ENCODE measurements at regions of chr1 and their contacts with region 1.

Region 1: DNA sequence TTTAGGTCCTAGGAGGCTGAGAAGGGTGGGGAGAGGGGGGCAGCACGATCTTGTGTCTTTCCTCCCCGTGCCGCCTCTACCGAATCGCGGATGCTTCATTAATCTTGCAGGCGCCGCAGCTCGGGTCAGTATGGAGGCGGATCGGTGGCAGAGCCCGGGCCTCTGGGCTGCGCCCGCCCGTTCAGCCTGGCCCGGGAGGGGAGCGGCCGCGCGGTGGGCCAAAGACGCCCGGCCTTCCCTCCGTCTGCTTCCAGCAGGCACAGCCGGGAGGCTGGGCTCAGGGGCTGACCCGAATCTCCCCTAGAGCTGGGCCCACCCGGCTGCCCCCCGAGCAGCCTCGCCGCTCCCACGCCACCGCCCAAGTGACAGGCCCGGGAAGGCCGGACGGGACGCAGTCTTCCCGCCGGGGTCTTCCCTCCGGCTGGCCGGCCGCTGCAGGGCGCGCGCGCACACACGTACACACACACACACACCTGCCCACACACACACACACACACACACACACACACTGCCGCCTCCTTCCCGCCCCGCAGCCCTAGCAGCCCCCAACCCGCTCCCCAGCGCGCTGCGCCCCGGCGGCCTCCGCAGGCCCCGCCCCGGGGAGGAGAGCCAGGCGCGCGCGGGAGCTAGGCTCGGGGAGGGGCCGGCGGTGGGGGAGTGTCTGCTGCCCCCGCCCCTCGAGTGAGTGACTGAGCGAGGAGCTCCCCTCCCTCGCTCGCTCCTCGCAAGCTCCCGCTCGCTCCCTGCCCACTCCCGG is at the start of gene C1orf21:
- DNase-seq: peak; percentile 89
- H3K4me3 ChIP-seq: peak within 1 kb of the TSS; percentile 66 to 87 (median 78)
- H3K27ac ChIP-seq: peak within 1 kb of the TSS; percentile 85
- H3K4me1 ChIP-seq: peaks cover 35% of the 10 kb centered on the region
- H3K27me3 ChIP-seq: no peaks in the 10 kb centered on the region
- CTCF ChIP-seq: no peak
- total RNA-seq, gene C1orf21: 34.8 to 37.2 TPM

Region 2: DNA sequence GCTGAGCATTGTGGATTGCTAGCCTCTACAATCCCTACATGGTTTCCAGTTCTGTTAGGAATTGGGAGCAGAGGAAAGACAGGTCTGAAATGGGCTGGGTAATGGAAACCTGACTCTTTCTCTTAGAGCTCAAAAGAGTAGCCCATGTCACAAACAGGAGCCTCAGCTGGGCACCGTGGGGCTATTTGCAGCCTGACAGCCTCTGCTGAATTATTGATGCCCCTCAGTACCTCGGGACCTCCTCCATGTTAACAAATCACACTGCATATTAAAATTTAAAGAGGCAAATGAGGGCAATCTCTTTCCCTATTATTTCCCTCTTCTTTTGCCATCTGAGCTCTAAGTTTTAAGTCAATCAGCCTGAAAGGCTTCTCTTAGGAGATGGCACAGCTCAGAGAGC is 177.9 kb before region 1 on chr1:
- CTCF ChIA-PET with region 1: no interaction called
- dilution Hi-C with region 1: no loop called
- in situ Hi-C with region 1: no loop called
- intact Hi-C with region 1: no loop called
- DNase-seq: no peak
- H3K4me3 ChIP-seq: no peak overlapping the region
- H3K27ac ChIP-seq: no peak overlapping the region
- H3K4me1 ChIP-seq: peaks cover 5% of the 10 kb centered on the region
- H3K27me3 ChIP-seq: no peaks in the 10 kb centered on the region
- CTCF ChIP-seq: no peak

Region 3: DNA sequence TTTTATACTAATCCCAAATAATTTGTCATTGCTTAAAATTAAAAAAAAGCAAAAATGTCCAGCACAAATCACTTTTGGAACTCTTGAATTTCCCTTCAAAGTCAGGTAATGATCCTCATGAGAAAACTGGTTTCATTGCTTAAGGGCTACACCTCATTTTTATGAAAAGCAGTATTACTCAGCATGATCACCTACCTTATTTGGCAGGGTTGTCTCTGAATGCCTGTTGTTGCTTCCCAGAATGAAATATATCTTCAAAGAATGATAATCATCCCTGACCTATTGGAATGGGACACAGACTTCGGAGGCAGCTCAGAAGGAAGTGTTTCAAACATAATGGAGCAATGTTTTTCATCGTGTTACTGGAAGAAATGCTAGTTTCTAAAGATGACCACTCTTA is 30.0 kb after region 1 on chr1:
- CTCF ChIA-PET with region 1: no interaction called
- dilution Hi-C with region 1: no loop called
- in situ Hi-C with region 1: no loop called
- intact Hi-C with region 1: loop called (anchors 1 kb)
- DNase-seq: peak; percentile 88
- H3K4me3 ChIP-seq: peak overlapping the region in 1 of 3 experiments; percentile 5
- H3K27ac ChIP-seq: peak overlapping the region; percentile 87
- H3K4me1 ChIP-seq: peaks cover 53% of the 10 kb centered on the region
- H3K27me3 ChIP-seq: no peaks in the 10 kb centered on the region
- CTCF ChIP-seq: no peak

Region 4: GRCh38 chr1:184465489-184466146 is 79.1 kb after region 1 on chr1:
- CTCF ChIA-PET with region 1: no interaction called
- dilution Hi-C with region 1: no loop called
- in situ Hi-C with region 1: no loop called
- intact Hi-C with region 1: loop called (anchors 5 kb)
- DNase-seq: no peak
- H3K4me3 ChIP-seq: no peak overlapping the region
- H3K27ac ChIP-seq: no peak overlapping the region
- H3K4me1 ChIP-seq: peaks cover 6% of the 10 kb centered on the region
- H3K27me3 ChIP-seq: no peaks in the 10 kb centered on the region
- CTCF ChIP-seq: no peak

Region 5: GRCh38 chr1:184514447-184514846 is 128.0 kb after region 1 on chr1:
- CTCF ChIA-PET with region 1: no interaction called
- dilution Hi-C with region 1: no loop called
- in situ Hi-C with region 1: no loop called
- intact Hi-C with region 1: no loop called
- DNase-seq: no peak
- H3K4me3 ChIP-seq: no peak overlapping the region
- H3K27ac ChIP-seq: no peak overlapping the region
- H3K4me1 ChIP-seq: peaks cover 12% of the 10 kb centered on the region
- H3K27me3 ChIP-seq: no peaks in the 10 kb centered on the region
- CTCF ChIP-seq: no peak

Region 6: DNA sequence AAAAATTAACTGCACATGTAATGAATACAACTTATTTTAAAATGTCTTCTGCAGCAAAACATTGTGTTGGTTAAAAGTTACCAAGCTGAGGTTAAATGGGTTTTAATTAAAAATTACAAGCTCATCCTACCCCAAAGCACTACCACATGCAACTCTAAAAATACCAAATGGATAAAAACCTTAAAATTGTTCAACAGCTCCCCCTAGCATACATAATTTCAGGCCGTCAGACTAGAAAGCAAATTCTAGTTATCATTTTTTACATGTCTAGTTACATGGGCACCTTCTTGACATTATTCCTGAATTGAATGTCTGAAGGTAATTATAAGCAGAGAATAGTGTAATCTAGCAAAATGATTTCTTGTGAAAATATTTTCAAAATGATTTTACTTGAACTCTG is 176.8 kb after region 1 on chr1:
- CTCF ChIA-PET with region 1: no interaction called
- dilution Hi-C with region 1: no loop called
- in situ Hi-C with region 1: loop called in 1 of 2 experiments (anchors 10 kb)
- intact Hi-C with region 1: loop called (anchors 1 kb)
- DNase-seq: peak; percentile 16
- H3K4me3 ChIP-seq: no peak overlapping the region
- H3K27ac ChIP-seq: no peak overlapping the region
- H3K4me1 ChIP-seq: peaks cover 14% of the 10 kb centered on the region
- H3K27me3 ChIP-seq: no peaks in the 10 kb centered on the region
- CTCF ChIP-seq: peak; percentile 46 to 60

Region 7: GRCh38 chr1:184664042-184664655 is 277.7 kb after region 1 on chr1:
- CTCF ChIA-PET with region 1: no interaction called
- dilution Hi-C with region 1: no loop called
- in situ Hi-C with region 1: no loop called
- intact Hi-C with region 1: loop called (anchors 2 kb)
- DNase-seq: peak; percentile 43
- H3K4me3 ChIP-seq: peak overlapping the region; percentile 40 to 51 (median 48)
- H3K27ac ChIP-seq: no peak overlapping the region
- H3K4me1 ChIP-seq: peaks cover 10% of the 10 kb centered on the region
- H3K27me3 ChIP-seq: no peaks in the 10 kb centered on the region
- CTCF ChIP-seq: peak; percentile 77 to 97